BJ (cell line): ENCODE measurements at regions of chr6 and their contacts with region 1.

Region 1: DNA sequence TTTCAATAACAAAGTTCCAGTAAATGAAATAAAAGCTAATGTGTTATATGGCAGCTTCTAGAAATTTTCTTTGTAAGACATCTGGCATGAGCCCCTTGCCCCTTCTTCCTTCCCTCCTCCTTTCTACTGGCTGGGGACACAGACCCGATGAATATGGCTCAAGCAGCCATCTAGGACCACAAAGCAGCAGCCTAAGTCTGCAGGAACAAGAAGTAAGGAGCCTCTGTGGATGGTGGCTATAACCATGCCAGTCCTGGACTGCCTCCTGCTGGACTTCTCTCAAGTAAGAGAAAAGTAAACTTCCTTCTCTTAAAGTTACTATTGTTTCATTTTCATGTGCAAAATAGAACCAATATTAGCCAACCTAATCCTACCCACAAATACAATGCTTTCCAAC is 114.9 kb upstream of the DST start:
- DNase-seq: no peak
- H3K4me3 ChIP-seq: no peak overlapping the region
- H3K27me3 ChIP-seq: no peaks in the 10 kb centered on the region
- CTCF ChIP-seq: peak; percentile 43; the same call in 1 of the 2 replicates

Region 2: DNA sequence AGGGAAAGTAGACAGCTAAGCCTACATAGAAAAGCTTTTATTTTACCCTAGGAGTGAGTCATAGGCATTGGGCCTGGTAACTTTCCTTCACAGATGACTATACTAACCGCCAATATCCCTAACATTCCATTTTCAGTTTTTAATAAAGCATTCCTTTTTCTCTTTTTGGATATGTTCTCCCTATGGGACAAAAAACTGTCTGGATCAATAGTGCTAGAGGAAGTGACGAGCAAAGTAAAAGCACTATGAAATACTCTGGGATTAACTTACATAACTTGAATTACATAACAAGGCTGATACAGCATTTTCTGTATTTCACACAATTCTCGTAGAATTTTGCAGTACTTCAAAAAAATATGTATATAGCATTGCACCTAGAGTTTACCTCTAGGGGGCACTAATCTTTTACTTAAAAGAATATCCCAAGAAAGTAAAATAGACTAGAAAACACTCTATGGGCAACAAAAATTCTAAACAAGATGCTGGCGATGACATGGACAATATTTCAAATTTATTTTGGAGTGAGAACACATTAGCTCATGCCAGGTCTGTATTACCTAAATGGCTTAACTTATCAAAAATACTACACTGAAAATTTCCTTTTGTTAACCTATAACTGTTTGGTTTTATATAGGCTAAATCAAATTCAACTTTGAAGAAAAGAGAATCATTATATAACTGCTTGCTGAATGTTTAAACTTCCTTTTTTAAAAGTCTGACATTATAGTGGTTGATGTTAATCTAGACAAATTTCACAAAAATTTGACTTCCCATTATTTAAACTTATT is 48.6 kb before region 1 on chr6:
- CTCF ChIA-PET with region 1: interaction called, 20 read pairs
- POLR2A ChIA-PET with region 1: no interaction called
- DNase-seq: no peak
- H3K4me3 ChIP-seq: no peak overlapping the region
- H3K27me3 ChIP-seq: no peaks in the 10 kb centered on the region
- CTCF ChIP-seq: peak; percentile 42

Region 3: GRCh38 chr6:56793938-56794337 is 36.4 kb after region 1 on chr6:
- CTCF ChIA-PET with region 1: no interaction called
- POLR2A ChIA-PET with region 1: no interaction called
- DNase-seq: no peak
- H3K4me3 ChIP-seq: no peak overlapping the region
- H3K27me3 ChIP-seq: no peaks in the 10 kb centered on the region
- CTCF ChIP-seq: no peak

Region 4: DNA sequence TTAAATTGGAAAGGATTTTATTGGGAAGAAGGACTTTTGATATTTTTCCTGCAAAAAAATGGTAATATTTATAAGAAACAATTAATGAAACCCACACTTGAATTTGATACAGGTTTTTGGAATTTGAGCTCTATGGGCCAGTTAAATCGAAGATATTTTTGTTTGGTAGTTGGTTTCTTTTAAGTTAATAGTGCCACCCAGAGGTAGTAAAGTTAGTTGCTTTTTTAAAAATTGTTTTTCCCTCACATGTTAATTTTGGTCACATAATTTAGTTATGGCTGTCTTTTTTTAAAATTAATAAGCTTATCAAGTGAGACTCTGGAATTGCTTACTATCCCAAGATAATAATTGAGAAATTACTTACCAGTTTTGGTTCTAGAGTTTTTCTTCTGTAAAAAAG is 567.0 kb after region 1 on chr6:
- CTCF ChIA-PET with region 1: no interaction called
- POLR2A ChIA-PET with region 1: no interaction called
- DNase-seq: no peak
- H3K4me3 ChIP-seq: no peak overlapping the region
- H3K27me3 ChIP-seq: no peaks in the 10 kb centered on the region
- CTCF ChIP-seq: peak; percentile 40